ENCODE measurements at regions of chr3 and their contacts with region 1.

Region 1: DNA sequence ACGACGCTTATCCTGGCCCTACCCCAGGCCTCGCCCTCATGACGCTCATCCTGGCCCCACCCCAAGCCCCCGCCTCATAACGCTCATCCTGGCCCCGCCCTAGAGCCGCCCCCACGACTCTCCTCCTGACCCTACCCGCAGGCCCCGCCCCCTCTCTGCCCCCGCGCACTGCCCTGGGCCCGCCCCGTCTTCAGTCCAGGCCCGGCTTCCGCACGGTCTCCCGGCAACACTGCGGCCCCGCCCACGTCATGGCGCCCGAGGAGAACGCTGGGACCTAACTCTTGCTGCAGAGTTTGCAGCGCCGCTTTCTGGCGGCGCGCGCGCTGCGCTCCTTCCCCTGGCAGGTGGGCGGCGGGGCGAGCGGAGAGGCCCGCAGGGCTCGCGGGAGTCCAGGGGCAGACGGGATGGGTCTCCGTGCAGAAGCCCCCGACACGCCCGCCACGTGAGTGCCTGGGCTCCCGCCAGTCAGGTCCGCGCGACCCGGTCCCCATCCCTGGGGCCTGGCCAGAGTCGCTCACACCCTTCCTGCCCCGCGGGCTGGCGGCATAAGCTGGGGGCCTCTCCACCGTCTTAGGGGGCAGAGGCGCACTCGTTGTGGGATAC is 52.5 kb upstream of the ROPN1B start:
- DNase-seq: peak in 3 of 5 donors; percentile 92 to 95 (median 93)
- H3K4me3 ChIP-seq: peak overlapping the region; percentile 11 to 76
- H3K4me3 Mint-ChIP-seq: peak overlapping the region; percentile 88 to 95 (median 90)
- H3K27ac ChIP-seq: peak overlapping the region; percentile 81
- H3K27ac Mint-ChIP-seq: peak overlapping the region; percentile 94 to 99 (median 97)
- H3K4me1 ChIP-seq: peaks cover 10% of the 10 kb centered on the region
- H3K4me1 Mint-ChIP-seq: peaks cover 5 to 26% (median 13%) of the 10 kb centered on the region in 4 donors
- H3K27me3 ChIP-seq: no peaks in the 10 kb centered on the region
- H3K27me3 Mint-ChIP-seq: no peaks in the 10 kb centered on the region

Region 2: DNA sequence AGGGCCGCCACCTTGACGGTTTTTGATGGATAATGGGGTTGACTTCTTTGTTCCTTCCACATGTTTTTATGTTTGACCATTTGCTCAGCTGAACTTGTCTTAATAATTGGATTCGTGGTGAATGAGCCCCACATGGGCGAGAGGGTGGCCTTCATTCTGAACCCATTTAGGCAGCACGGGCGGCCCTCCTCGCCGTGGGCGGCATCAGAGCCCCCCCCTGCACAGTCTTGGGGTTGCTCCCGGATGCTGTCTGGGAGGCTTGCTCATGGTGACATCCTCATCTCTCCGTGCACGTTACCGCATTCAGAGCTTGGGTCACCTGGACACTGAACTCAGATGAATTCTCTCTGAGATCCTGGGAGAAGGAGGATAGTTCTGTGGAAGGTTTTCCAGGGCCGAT is 148.8 kb before region 1 on chr3:
- CTCF ChIA-PET with region 1: interaction called, 5 read pairs
- POLR2A ChIA-PET with region 1: no interaction called
- intact Hi-C with region 1: loop called (anchors 2 kb)
- DNase-seq: no peak
- H3K4me3 ChIP-seq: no peak overlapping the region
- H3K4me3 Mint-ChIP-seq: peak overlapping the region; percentile 52 to 84 (median 80)
- H3K27ac ChIP-seq: no peak overlapping the region
- H3K27ac Mint-ChIP-seq: peak overlapping the region in 1 of 7 donors; percentile 63
- H3K4me1 ChIP-seq: no peaks in the 10 kb centered on the region
- H3K4me1 Mint-ChIP-seq: peaks cover 0 to 10% (median 4%) of the 10 kb centered on the region in 4 donors
- H3K27me3 ChIP-seq: no peaks in the 10 kb centered on the region
- H3K27me3 Mint-ChIP-seq: peaks cover 10 to 20% of the 10 kb centered on the region in 2 donors

Region 3: GRCh38 chr3:126034481-126035361 is 118.2 kb after region 1 on chr3:
- CTCF ChIA-PET with region 1: no interaction called
- POLR2A ChIA-PET with region 1: no interaction called
- intact Hi-C with region 1: no loop called
- DNase-seq: no peak
- H3K4me3 ChIP-seq: no peak overlapping the region
- H3K4me3 Mint-ChIP-seq: no peak overlapping the region
- H3K27ac ChIP-seq: no peak overlapping the region
- H3K27ac Mint-ChIP-seq: peak overlapping the region in 3 of 7 donors; percentile 1 to 33 (median 11)
- H3K4me1 ChIP-seq: peaks cover 12% of the 10 kb centered on the region
- H3K4me1 Mint-ChIP-seq: peaks cover 6 to 10% (median 7%) of the 10 kb centered on the region in 4 donors
- H3K27me3 ChIP-seq: no peaks in the 10 kb centered on the region
- H3K27me3 Mint-ChIP-seq: no peaks in the 10 kb centered on the region

Region 4: DNA sequence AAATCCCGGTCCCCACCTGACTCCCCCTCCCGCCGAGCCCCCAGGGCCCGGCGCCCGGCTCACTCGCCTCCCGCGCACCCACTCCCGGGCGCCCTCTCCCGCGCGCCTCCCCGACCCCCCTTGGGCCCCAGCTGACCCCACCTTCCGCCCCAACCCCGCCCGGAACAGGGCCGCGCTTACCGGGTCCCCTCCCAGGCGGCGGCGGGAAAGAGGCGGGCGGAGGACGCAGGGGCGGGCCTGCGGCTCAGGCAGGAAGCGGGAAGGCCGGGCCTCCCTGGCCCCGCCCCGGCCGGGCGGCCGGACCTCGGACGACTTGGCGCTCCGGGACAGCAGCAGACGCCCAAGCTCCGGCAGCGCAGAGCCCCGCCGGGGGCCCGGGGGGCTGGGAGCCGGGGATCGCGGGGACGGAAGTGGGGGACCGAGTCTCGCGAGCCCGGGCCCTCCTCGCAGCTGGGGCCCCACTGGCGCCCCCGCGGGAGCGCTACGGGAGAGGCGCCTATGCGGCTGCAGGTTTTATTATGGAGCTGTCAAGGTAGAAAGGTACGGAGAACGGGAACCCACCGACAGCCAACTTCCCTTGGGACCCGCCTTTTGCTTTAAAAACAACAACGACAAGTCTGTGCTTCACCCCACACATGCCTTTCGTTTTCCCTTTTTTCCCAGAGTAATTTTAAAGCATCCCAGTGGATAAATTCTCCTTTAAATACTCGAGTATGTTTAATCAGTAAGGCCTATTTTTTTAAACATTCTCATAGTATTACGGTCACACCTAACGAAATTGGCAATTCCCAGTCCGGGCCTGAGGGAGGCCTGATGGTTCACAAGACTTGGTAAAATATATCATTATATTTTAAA is 167.7 kb after region 1 on chr3 and contains the start of gene SLC41A3:
- CTCF ChIA-PET with region 1: no interaction called
- POLR2A ChIA-PET with region 1: interaction called, 3 read pairs
- intact Hi-C with region 1: loop called (anchors 1 kb)
- DNase-seq: peak; percentile 80 to 89 (median 84)
- H3K4me3 ChIP-seq: peak within 1 kb of the TSS in 1 of 2 donors; percentile 64
- H3K4me3 Mint-ChIP-seq: peak within 1 kb of the TSS; percentile 88 to 94 (median 92)
- H3K27ac ChIP-seq: peak within 1 kb of the TSS; percentile 63
- H3K27ac Mint-ChIP-seq: peak within 1 kb of the TSS; percentile 90 to 98 (median 93)
- H3K4me1 ChIP-seq: peaks cover 26% of the 10 kb centered on the region
- H3K4me1 Mint-ChIP-seq: peaks cover 9 to 32% (median 20%) of the 10 kb centered on the region in 4 donors
- H3K27me3 ChIP-seq: no peaks in the 10 kb centered on the region
- H3K27me3 Mint-ChIP-seq: no peaks in the 10 kb centered on the region
- total RNA-seq, gene SLC41A3: 32.5 to 41.2 TPM

Region 5: DNA sequence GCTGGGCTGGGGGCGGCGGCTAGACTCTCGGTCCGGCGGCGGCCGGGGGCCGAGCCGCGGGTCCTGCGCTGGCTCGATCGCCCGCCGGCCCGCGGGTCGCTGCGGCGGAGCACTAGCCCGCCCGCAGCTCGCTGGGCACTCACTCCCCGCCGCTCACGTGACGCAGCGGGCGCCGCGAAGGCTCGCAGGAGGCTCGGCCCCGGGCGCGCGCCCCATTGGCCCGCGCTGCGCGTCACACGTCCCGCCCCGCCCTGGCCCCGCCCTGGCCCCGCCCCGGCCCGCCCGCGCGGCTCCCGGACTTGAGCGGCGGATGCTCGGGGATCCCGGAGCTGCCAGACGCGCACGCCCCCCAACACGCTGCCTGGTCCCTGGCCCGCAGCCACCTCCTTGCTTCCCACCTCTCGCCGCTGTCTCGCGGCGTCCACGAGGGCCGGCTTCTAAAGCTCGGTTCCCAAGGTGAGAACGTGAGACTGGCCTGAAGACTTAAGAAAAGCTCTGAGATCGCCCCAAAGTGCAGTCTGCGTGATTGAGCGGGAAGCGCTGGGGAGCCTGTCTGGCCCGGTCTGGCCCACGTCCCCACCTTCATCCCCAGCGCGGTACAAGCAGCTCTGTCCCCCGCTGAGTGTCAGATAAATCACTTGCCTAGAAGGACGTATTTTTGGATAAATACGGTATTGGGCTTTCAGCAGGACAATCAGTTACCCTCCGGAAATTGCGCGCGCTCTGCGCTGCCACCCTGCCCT is 441.0 kb after region 1 on chr3 and contains the start of gene KLF15:
- CTCF ChIA-PET with region 1: no interaction called
- POLR2A ChIA-PET with region 1: no interaction called
- intact Hi-C with region 1: loop called (anchors 2 kb)
- DNase-seq: peak; percentile 64 to 72 (median 66)
- H3K4me3 ChIP-seq: peak within 1 kb of the TSS; percentile 42 to 49
- H3K4me3 Mint-ChIP-seq: peak within 1 kb of the TSS; percentile 85 to 93 (median 90)
- H3K27ac ChIP-seq: no peak within 1 kb of the TSS
- H3K27ac Mint-ChIP-seq: peak within 1 kb of the TSS in 6 of 7 donors; percentile 48 to 84 (median 66)
- H3K4me1 ChIP-seq: peaks cover 9% of the 10 kb centered on the region
- H3K4me1 Mint-ChIP-seq: peaks cover 9 to 25% (median 12%) of the 10 kb centered on the region in 4 donors
- H3K27me3 ChIP-seq: peaks cover 40% of the 10 kb centered on the region
- H3K27me3 Mint-ChIP-seq: peaks cover 36 to 44% of the 10 kb centered on the region in 2 donors
- total RNA-seq, gene KLF15: 0.67 to 0.72 TPM

Region 6: DNA sequence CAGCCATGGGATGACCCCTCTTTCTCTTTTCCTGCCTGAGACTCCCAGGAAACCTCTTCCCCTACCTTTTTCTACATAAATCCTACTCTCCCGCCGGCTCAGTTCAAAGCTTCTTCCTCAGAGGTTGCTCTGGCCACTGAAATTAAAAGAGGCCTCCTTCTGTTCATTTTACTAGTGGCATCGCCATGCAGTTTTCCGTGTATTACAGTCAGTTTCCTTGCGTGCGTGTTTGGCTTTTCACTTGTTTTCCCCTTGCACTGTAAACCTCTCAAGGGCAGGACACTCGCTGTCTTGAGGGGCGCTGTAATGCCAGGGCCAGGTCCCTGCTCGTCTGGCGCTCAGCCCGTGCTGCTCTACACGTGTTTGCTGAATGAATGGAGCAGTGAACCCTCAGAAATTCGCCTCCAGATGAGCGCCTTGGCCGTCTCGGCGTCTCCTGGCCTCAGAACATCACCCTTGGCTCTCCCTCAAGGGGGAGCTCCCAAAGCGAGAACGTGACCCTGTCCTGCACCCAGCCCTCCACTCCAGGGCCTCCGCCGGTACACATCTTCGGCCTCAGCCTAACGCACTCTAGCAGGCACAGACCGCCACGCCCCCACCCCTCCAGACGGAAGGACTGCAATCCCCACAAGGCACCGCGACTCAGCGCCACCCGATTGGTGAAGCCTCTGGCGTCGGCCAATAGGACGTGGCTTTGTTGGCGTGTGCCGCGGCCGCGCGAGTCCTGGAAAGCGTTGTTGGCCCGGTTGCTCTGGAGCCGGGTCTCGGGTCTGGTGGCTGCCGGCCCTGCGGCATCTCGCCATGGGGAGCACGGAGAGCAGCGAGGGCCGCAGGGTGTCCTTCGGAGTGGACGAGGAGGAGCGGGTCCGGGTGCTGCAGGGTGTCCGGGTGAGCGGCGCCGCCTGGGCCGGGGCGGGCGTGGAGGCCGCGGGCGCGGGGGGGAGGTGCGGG is 787.3 kb after region 1 on chr3 and contains the start of gene CHCHD6:
- CTCF ChIA-PET with region 1: no interaction called
- POLR2A ChIA-PET with region 1: no interaction called
- intact Hi-C with region 1: loop called (anchors 2 kb)
- DNase-seq: peak; percentile 93 to 98 (median 95)
- H3K4me3 ChIP-seq: peak within 1 kb of the TSS; percentile 34 to 81
- H3K4me3 Mint-ChIP-seq: peak within 1 kb of the TSS; percentile 91 to 98 (median 96)
- H3K27ac ChIP-seq: peak within 1 kb of the TSS; percentile 49
- H3K27ac Mint-ChIP-seq: peak within 1 kb of the TSS; percentile 88 to 97 (median 92)
- H3K4me1 ChIP-seq: peaks cover 18% of the 10 kb centered on the region
- H3K4me1 Mint-ChIP-seq: peaks cover 10 to 26% (median 17%) of the 10 kb centered on the region in 4 donors
- H3K27me3 ChIP-seq: no peaks in the 10 kb centered on the region
- H3K27me3 Mint-ChIP-seq: peaks cover 11 to 26% of the 10 kb centered on the region in 2 donors
- total RNA-seq, gene CHCHD6: 7.3 to 8.9 TPM

Region 7: DNA sequence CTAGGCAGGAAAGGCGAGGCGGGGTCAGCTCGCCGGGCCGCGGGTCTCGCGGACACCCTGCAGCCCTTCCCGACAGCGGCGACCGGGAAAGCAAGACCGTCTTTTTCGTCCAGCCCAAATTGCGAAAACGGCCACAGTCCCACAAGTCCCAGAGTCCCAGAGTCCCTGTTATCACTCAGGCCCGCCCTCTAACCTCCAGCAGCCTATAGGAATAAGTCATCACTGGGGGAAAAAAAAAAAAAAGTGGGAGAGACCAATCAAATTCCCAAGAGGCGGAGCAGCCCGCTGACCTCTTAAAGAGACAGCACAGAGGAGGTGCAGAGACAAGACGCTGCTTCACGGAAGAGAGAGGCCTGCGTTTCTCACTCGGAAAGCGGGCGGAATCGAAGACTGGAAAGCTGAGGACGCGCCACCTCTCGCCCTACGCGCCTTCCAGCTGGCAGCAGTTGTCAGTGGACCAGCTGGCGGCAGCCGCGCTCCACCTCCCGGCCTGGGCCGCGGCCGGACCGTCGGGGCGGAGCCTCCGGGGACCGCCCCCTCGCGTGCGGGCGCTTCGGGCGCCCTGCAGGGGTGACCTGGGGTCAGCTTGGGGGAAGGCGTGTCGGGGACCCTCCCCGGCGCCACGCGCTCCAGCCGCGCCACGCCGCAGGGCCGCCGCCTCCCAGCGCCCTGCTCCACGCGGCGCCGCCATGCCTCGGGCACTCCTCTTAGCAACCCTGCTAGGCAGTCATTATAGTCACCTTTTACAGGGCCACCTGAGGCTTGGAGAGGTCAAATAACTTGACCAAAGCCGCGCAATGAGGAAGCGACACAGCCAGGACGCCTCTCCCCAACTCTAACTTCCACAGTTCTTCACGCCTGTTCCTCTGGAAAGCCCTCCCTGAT is 1674.4 kb after region 1 on chr3 and contains the start of gene TPRA1:
- CTCF ChIA-PET with region 1: no interaction called
- POLR2A ChIA-PET with region 1: no interaction called
- intact Hi-C with region 1: loop called (anchors 5 kb)
- DNase-seq: peak; percentile 83 to 90 (median 88)
- H3K4me3 ChIP-seq: peak within 1 kb of the TSS; percentile 81 to 83
- H3K4me3 Mint-ChIP-seq: peak within 1 kb of the TSS; percentile 96 to 100 (median 98)
- H3K27ac ChIP-seq: peak within 1 kb of the TSS; percentile 73
- H3K27ac Mint-ChIP-seq: peak within 1 kb of the TSS; percentile 93 to 98 (median 96)
- H3K4me1 ChIP-seq: peaks cover 26% of the 10 kb centered on the region
- H3K4me1 Mint-ChIP-seq: peaks cover 16 to 50% (median 36%) of the 10 kb centered on the region in 4 donors
- H3K27me3 ChIP-seq: no peaks in the 10 kb centered on the region
- H3K27me3 Mint-ChIP-seq: no peaks in the 10 kb centered on the region
- total RNA-seq, gene TPRA1: 28.3 to 29.7 TPM